Heart right ventricle (tissue), 16 donors: ENCODE measurements at regions of chr10 and their contacts with region 1.

Region 1: DNA sequence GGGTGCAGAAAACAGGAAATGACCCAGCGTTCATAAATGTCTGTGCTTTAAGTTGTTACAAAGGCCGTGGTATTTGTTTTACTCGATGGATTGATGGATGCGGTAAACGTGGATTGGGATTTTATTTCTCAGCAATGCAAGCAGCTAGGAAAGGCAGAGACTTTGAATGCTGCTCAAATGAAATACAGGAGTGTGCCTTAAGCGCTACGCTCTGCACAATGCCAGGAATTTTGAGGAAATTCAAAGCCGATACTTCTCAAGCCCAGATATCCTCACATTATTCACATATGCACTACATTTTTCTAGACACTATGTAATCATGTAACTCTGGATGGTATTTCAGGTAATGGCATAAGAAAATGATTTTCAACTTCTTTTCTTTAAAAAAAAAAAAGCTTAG is 514.3 kb upstream of the ADARB2 start:
- DNase-seq: no peak
- ATAC-seq: no peak
- H3K4me3 ChIP-seq: no peak overlapping the region
- H3K27ac ChIP-seq: no peak overlapping the region
- H3K4me1 ChIP-seq: no peaks in the 10 kb centered on the region
- H3K27me3 ChIP-seq: no peaks in the 10 kb centered on the region
- CTCF ChIP-seq: no peak

Region 2: GRCh38 chr10:2306081-2306480 is 54.5 kb after region 1 on chr10:
- intact Hi-C with region 1: loop called in 1 of 10 experiments (anchors 10 kb)
- DNase-seq: no peak
- ATAC-seq: no peak
- H3K4me3 ChIP-seq: no peak overlapping the region
- H3K27ac ChIP-seq: no peak overlapping the region
- H3K4me1 ChIP-seq: no peaks in the 10 kb centered on the region
- H3K27me3 ChIP-seq: no peaks in the 10 kb centered on the region
- CTCF ChIP-seq: no peak

Region 3: DNA sequence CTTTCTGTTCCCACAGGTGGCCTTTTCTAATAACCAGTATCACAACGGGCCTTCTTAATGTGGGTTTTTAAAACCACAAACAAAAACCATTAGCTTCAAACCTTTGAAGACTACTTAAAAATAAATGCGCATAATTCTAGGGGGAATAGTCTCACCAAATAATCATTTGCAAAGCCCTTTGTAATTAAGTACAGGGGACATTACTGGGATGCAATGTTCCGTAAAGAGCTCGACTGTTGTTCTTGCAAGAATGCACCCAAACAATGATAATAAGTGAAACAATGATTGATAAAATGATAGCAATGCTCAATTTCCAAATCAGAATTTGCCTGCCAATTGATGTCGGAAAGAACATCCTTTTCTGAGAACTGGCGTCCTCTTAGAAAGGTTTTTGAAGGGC is 74.8 kb after region 1 on chr10:
- intact Hi-C with region 1: no loop called
- DNase-seq: no peak
- ATAC-seq: no peak
- H3K4me3 ChIP-seq: no peak overlapping the region
- H3K27ac ChIP-seq: no peak overlapping the region
- H3K4me1 ChIP-seq: no peaks in the 10 kb centered on the region
- H3K27me3 ChIP-seq: no peaks in the 10 kb centered on the region
- CTCF ChIP-seq: no peak